ENCODE measurements at regions of chr3 and their contacts with region 1.

Region 1: DNA sequence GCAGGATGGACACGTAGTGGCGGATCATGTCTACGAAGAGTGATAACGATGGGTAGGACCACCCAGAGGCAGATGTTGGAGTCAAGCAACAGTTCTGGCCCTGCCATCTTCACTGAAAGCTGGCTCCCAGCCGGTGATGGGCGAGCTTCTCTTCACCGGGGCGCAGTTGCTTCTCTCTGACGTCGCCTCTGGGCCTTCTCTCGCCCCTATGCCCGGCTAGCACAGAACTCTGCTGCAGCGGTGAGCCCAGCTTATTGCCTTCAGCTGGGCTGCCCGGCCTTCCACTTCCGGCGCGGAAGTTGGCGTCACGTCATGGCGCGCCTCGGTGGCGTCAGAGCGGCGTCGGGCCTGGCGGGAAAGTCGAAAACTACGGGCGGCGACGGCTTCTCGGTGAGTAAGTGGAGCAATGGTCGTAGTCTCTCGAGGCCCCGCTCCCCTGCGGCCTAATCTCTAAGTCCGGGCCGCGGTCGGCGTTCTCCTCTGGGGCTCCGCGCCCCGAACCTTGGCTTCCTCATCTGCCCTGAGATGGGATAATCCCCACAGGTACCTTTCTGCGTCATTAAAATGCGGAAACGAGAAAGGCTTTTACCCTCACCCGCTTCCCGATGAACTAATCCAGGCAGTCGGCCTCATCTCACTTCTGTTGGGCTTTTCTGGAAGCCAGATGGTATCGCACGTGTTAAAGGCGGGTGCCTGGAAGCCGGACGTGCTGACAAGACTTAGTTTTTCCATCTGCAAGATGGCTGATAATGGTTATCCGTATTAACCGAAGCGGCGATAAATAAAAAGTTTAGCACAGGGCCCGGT is at the start of gene FANCD2:
- DNase-seq: peak; percentile 83 to 97 (median 88)
- H3K4me3 ChIP-seq: peak within 1 kb of the TSS; percentile 64 to 100 (median 92)
- H3K27ac ChIP-seq: peak within 1 kb of the TSS in 50 of 59 donors; percentile 6 to 92 (median 61)
- H3K27me3 ChIP-seq: no peaks in the 10 kb centered on the region
- CTCF ChIP-seq: peak in 22 of 56 donors; percentile 3 to 42 (median 18)
- total RNA-seq, gene FANCD2: 0.71 to 6.8 (median 2.9) TPM

Region 2: GRCh38 chr3:9932843-9933560 is 93.3 kb before region 1 on chr3:
- intact Hi-C with region 1: loop called in 1 of 2 experiments (anchors 10 kb)
- DNase-seq: peak; percentile 55 to 88 (median 77)
- H3K4me3 ChIP-seq: peak overlapping the region; percentile 55 to 97 (median 87)
- H3K27ac ChIP-seq: peak overlapping the region; percentile 77 to 98 (median 93)
- H3K27me3 ChIP-seq: no peaks in the 10 kb centered on the region
- CTCF ChIP-seq: peak; percentile 31 to 83 (median 67)

Region 3: GRCh38 chr3:9986237-9986725 is 40.0 kb before region 1 on chr3:
- intact Hi-C with region 1: loop called (anchors 1 to 2 kb)
- DNase-seq: no peak
- H3K4me3 ChIP-seq: peak overlapping the region; percentile 67 to 100 (median 93)
- H3K27ac ChIP-seq: peak overlapping the region in 49 of 59 donors; percentile 1 to 91 (median 68)
- H3K27me3 ChIP-seq: no peaks in the 10 kb centered on the region
- CTCF ChIP-seq: no peak

Region 4: GRCh38 chr3:10115326-10116137 is 89.2 kb after region 1 on chr3 and contains the start of gene BRK1:
- intact Hi-C with region 1: loop called (anchors 5 kb)
- DNase-seq: peak; percentile 90 to 97 (median 96)
- H3K4me3 ChIP-seq: peak within 1 kb of the TSS; percentile 70 to 100 (median 95)
- H3K27ac ChIP-seq: peak within 1 kb of the TSS in 57 of 59 donors; percentile 29 to 97 (median 85)
- H3K27me3 ChIP-seq: no peaks in the 10 kb centered on the region
- CTCF ChIP-seq: peak in 42 of 56 donors; percentile 8 to 56 (median 30)
- total RNA-seq, gene BRK1: 62.8 to 136 (median 102) TPM

Region 5: DNA sequence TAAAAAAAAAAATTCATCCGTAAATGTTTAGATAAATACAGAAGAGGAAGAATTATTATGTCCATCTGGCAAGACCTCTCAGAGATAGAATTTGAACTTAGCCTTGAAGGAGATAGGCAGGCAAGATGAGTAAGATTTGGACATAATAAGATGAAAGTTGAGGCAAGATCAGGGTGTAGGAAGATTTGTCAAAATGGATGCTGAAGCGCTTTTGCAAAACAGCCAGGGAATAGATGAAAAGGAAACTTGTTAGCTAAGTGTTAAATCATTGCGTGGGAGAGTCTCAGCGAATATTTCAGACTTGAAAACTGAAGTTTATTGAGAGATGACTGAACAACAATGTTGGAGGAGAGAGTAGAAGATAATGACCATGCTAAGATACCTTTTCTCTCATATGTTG is 96.4 kb after region 1 on chr3:
- intact Hi-C with region 1: loop called (anchors 5 kb)
- DNase-seq: no peak
- H3K4me3 ChIP-seq: no peak overlapping the region
- H3K27ac ChIP-seq: peak overlapping the region in 16 of 59 donors; percentile 0 to 57 (median 21)
- H3K27me3 ChIP-seq: no peaks in the 10 kb centered on the region
- CTCF ChIP-seq: no peak

Region 6: DNA sequence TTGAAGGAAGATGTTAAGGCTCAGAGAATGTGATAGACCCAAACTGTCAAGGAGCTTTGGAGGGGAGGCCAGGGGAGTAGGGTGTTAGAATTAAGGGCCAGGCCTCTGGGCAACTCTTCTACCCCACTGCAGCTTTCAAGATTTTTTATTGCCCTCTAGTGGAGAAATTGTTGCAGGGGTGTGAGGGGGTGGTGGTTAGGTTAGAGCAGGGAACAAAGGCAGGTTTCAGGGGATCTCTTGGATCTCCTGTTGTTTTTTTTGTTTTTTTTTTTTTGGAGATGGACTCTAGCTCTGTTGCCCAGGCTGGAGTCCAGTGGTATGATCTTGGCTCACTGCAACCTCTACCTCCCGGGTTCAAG is 296.0 kb after region 1 on chr3:
- intact Hi-C with region 1: loop called in 1 of 2 experiments (anchors 5 kb)
- DNase-seq: peak in 1 of 10 donors; percentile 12
- H3K4me3 ChIP-seq: no peak overlapping the region
- H3K27ac ChIP-seq: peak overlapping the region in 1 of 59 donors; percentile 9
- H3K27me3 ChIP-seq: no peaks in the 10 kb centered on the region
- CTCF ChIP-seq: peak in 29 of 56 donors; percentile 12 to 41 (median 23)

Measured in dorsolateral prefrontal cortex (tissue), 120 donors.